ENCODE measurements at regions of chr14 and their contacts with region 1.

Region 1: DNA sequence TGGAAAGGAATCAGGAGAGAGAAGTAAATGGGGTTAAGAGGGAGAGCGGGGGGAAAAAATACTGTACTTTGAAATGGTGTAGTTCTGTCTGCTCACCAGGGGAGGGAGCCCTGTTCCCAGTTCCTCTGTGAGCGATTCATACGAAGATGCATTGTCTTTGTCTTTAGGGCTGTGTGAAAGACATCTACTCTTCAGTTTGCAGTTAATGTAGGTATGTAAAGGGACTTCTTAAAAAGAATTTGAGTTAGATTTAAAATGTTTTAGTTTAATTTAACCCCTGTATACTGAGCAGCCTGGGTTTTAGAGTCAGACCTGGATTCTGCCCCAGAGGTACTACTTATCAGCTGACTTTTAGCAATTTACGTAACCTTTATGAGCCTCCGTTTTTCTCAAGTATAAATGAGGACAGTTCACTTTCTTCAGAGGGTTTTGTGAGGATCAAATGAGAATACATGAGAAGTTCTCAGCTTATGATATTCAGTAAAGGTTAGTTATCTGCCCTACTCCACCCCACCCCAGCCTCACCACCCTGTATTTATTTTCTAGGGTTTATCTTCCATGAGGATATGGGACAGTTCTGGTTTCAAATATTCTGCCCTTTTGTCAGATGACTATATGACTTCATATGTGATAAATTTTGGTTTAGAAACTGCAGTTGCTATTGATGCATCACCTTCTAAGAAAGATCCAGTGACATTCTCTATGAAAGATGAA is 82.5 kb upstream of the EVL start:
- DNase-seq: peak; percentile 35 to 77 (median 72)
- ATAC-seq: peak; percentile 100
- H3K4me3 ChIP-seq: no peak overlapping the region
- H3K4me3 Mint-ChIP-seq: no peak overlapping the region
- H3K27ac ChIP-seq: no peak overlapping the region
- H3K27ac Mint-ChIP-seq: peak overlapping the region in 6 of 9 donors; percentile 3 to 85 (median 68)
- H3K4me1 ChIP-seq: peaks cover 0 to 15% of the 10 kb centered on the region in 2 donors
- H3K4me1 Mint-ChIP-seq: peaks cover 5 to 21% (median 19%) of the 10 kb centered on the region in 7 donors
- H3K27me3 ChIP-seq: no peaks in the 10 kb centered on the region
- H3K27me3 Mint-ChIP-seq: no peaks in the 10 kb centered on the region

Region 2: GRCh38 chr14:99430465-99430864 is 552.2 kb before region 1 on chr14:
- CTCF ChIA-PET with region 1: no interaction called
- POLR2A ChIA-PET with region 1: no interaction called
- intact Hi-C with region 1: no loop called
- DNase-seq: no peak
- ATAC-seq: peak; percentile 65
- H3K4me3 ChIP-seq: no peak overlapping the region
- H3K4me3 Mint-ChIP-seq: no peak overlapping the region
- H3K27ac ChIP-seq: no peak overlapping the region
- H3K27ac Mint-ChIP-seq: no peak overlapping the region
- H3K4me1 ChIP-seq: peaks cover 0 to 9% of the 10 kb centered on the region in 2 donors
- H3K4me1 Mint-ChIP-seq: peaks cover 5 to 35% (median 17%) of the 10 kb centered on the region in 7 donors
- H3K27me3 ChIP-seq: no peaks in the 10 kb centered on the region
- H3K27me3 Mint-ChIP-seq: no peaks in the 10 kb centered on the region

Region 3: DNA sequence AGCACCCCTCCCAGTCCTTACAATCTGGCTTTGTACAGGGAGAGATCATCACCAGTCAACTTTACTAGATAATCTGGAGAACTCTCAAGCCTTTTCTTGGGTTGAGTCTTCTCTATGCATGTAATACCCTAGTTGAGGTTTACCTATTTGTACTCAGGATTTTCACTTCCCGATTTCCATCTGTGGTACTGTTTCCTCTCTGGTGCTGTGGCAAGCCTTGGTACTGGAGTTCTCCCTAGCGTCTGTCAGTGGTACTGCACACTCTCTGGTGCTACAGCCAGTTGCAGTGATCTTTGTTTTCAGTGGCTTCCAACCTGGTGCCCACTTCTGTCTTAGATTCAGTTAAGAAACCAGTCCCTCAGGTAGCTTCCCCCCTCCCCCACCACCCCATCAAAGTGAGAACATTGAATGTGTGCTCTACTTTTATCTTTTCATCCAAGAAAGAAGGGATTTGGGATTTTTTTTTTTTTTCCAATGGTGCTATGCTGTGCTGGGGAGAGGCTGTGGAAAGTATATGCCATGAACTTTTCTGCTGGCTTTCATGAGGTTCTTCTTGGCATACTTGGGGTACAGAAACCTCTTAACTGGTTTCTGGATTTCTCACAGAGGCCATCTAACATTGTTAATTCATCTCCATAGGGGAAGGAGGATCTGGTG is 13.1 kb after region 1 on chr14:
- CTCF ChIA-PET with region 1: interaction called, 4 read pairs
- POLR2A ChIA-PET with region 1: no interaction called
- intact Hi-C with region 1: loop called in 1 of 2 experiments (anchors 1 kb)
- DNase-seq: peak; percentile 20 to 61 (median 48)
- ATAC-seq: peak; percentile 99
- H3K4me3 ChIP-seq: no peak overlapping the region
- H3K4me3 Mint-ChIP-seq: peak overlapping the region in 1 of 10 donors; percentile 35
- H3K27ac ChIP-seq: no peak overlapping the region
- H3K27ac Mint-ChIP-seq: no peak overlapping the region
- H3K4me1 ChIP-seq: no peaks in the 10 kb centered on the region
- H3K4me1 Mint-ChIP-seq: peaks cover 0 to 9% (median 6%) of the 10 kb centered on the region in 7 donors
- H3K27me3 ChIP-seq: no peaks in the 10 kb centered on the region
- H3K27me3 Mint-ChIP-seq: peaks cover 0 to 34% (median 0%) of the 10 kb centered on the region in 5 donors

Region 4: DNA sequence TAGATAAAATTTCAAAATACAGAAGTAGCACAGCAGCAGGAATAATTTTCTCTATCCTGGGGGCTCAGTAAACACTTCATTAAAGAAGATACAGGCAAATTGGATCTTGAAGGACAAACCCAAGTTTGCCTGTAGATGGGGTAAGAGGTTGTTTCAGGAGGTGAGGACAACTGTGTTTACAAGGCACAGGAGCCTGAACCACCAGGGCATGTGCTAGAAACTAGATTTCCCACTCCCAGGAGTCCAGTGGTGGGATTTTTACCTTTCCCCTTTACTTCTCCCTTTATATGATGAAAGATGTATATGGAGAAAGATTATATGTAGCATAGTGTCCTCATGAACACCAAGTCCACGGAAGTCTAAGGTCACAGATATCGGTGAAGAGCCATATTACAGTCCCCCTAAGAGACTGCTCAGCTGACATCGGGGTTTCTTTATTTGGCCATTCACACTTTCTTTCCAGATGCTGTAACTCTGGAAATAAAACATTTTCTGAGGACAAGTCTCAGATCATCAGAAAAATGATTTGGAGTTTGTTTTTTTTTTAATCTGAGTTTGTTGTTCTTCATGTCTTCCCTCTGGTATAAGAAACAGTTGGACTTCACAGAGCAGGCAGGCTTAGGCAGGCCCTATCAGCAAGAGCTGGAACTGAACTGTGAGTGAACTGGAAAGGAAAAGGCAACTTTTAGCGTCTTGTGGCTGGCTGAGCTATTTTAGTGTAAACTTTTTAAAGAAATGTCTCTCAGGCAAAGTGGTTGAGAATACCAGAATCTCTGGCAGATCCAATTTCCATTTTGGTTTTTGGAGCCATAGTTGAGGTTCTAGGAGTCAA is 74.5 kb after region 1 on chr14:
- CTCF ChIA-PET with region 1: interaction called, 8 read pairs
- POLR2A ChIA-PET with region 1: interaction called, 4 read pairs
- intact Hi-C with region 1: loop called in 1 of 2 experiments (anchors 2 kb)
- DNase-seq: peak in 7 of 9 donors; percentile 62 to 76 (median 67)
- ATAC-seq: peak; percentile 83
- H3K4me3 ChIP-seq: no peak overlapping the region
- H3K4me3 Mint-ChIP-seq: peak overlapping the region; percentile 35 to 79 (median 72)
- H3K27ac ChIP-seq: peak overlapping the region; percentile 33
- H3K27ac Mint-ChIP-seq: peak overlapping the region; percentile 83 to 96 (median 94)
- H3K4me1 ChIP-seq: peaks cover 49% of the 10 kb centered on the region in 2 donors
- H3K4me1 Mint-ChIP-seq: peaks cover 37 to 70% (median 60%) of the 10 kb centered on the region in 7 donors
- H3K27me3 ChIP-seq: no peaks in the 10 kb centered on the region
- H3K27me3 Mint-ChIP-seq: no peaks in the 10 kb centered on the region

Region 5: DNA sequence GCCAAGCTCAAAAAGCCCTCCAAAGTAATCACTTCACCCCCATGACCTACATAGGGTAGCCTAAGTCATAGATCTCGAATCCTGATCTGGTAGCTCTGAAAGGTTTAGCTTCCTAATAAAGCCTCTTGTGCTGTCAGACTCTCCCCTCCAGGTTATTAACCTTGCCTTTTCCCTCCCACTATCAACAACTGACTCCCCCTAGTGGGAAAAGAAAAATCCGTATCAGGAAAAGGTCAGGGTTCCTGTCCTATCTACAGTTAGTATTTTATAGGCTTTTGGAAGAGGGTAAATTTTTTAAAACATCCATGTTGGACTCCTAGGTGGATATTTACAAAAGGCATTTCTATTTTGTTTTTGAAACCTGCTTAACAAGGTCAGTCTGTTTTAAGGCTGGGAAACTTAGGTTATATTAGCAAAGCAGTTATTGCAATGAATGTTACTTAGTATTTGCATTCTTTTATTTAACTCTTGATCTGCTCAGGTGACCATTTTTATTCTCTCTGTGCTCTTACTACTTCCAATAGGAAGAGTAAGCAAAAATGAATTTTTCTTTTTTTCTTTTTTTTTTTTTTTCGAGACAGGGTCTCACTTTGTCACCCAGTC is 264.2 kb after region 1 on chr14:
- CTCF ChIA-PET with region 1: interaction called, 8 read pairs
- POLR2A ChIA-PET with region 1: no interaction called
- intact Hi-C with region 1: loop called in 1 of 2 experiments (anchors 2 kb)
- DNase-seq: peak in 7 of 9 donors; percentile 15 to 48 (median 35)
- ATAC-seq: peak; percentile 68
- H3K4me3 ChIP-seq: no peak overlapping the region
- H3K4me3 Mint-ChIP-seq: peak overlapping the region in 9 of 10 donors; percentile 39 to 96 (median 61)
- H3K27ac ChIP-seq: peak overlapping the region; percentile 54
- H3K27ac Mint-ChIP-seq: peak overlapping the region; percentile 7 to 84 (median 67)
- H3K4me1 ChIP-seq: peaks cover 46 to 62% of the 10 kb centered on the region in 2 donors
- H3K4me1 Mint-ChIP-seq: peaks cover 49 to 90% (median 65%) of the 10 kb centered on the region in 7 donors
- H3K27me3 ChIP-seq: no peaks in the 10 kb centered on the region
- H3K27me3 Mint-ChIP-seq: no peaks in the 10 kb centered on the region